ENCODE measurements at regions of chr2 and their contacts with region 1.

Region 1: GRCh38 chr2:172555522-172556283 is at the start of gene PDK1:
- DNase-seq: peak; percentile 86 to 94
- H3K4me3 ChIP-seq: peak within 1 kb of the TSS; percentile 85 to 90
- H3K27ac ChIP-seq: peak within 1 kb of the TSS; percentile 98 to 99
- H3K4me1 ChIP-seq: peaks cover 0 to 16% (median 6%) of the 10 kb centered on the region in 4 donors
- H3K27me3 ChIP-seq: no peaks in the 10 kb centered on the region
- CTCF ChIP-seq: no peak

Region 2: DNA sequence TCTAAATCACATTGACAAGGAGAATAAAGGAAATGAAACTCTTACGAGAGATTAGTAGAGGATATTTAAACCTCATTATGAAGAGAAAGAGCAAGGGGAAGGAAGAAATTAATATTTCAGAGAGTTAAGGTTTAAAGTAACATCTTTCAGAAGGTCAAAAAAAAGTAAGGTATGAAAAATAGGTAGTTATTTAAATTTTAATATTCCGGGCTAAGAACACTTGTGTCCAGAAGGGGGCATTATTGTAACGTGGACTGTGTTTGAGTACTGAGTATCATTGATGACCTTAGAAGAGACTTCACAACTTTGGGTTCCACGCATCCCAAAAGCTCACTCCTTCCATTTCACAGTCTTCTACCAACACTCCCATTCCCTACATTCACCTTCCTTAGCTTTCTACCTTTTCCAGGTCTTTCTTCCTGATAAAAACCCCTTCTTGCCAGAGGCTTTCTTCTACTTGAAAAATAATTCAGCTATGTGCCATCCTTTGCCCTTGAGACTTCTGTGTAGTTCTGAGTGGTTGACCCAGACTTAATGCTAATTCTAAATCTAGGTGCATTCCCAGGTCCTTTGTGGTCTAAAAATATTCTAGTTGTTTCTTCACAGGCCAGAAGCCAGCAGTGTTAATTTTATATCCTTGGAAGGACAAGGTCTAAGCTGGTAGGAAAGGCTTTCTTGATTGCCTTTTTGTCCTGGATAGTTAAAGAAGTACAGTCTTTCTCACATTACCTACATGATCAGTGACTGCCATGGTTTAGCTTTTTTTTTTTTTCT is 851.9 kb before region 1 on chr2:
- intact Hi-C with region 1: no loop called
- DNase-seq: no peak
- H3K4me3 ChIP-seq: no peak overlapping the region
- H3K27ac ChIP-seq: no peak overlapping the region
- H3K4me1 ChIP-seq: peaks cover 0 to 13% (median 7%) of the 10 kb centered on the region in 4 donors
- H3K27me3 ChIP-seq: no peaks in the 10 kb centered on the region
- CTCF ChIP-seq: peak; percentile 10 to 28

Region 3: GRCh38 chr2:172193331-172194089 is 362.2 kb before region 1 on chr2:
- intact Hi-C with region 1: no loop called
- DNase-seq: no peak
- H3K4me3 ChIP-seq: no peak overlapping the region
- H3K27ac ChIP-seq: no peak overlapping the region
- H3K4me1 ChIP-seq: no peaks in the 10 kb centered on the region
- H3K27me3 ChIP-seq: no peaks in the 10 kb centered on the region
- CTCF ChIP-seq: no peak

Region 4: DNA sequence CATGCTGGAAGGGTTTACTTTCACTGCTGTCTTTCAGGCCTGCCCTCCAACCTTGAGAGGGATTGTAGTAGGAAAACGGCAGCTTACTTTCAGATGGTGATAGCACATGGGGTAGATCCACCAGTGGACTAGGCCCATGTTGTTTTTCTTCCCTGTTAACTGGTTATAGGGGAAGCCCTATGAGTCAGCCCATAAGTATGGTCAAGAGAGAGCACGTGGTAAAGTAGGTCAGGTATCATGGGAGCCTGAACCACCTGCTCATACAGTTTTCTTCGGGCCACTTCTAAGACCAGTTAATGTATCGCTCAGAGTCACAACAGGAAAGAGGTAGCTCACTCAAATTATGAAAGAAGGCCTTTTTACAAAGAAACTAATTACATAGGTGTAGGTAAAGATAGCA is 33.2 kb after region 1 on chr2:
- intact Hi-C with region 1: loop called (anchors 2 kb)
- DNase-seq: no peak
- H3K4me3 ChIP-seq: no peak overlapping the region
- H3K27ac ChIP-seq: no peak overlapping the region
- H3K4me1 ChIP-seq: peaks cover 0 to 9% (median 2%) of the 10 kb centered on the region in 4 donors
- H3K27me3 ChIP-seq: no peaks in the 10 kb centered on the region
- CTCF ChIP-seq: no peak

Region 5: GRCh38 chr2:172821370-172822347 is 266.0 kb after region 1 on chr2:
- intact Hi-C with region 1: no loop called
- DNase-seq: no peak
- H3K4me3 ChIP-seq: no peak overlapping the region
- H3K27ac ChIP-seq: no peak overlapping the region
- H3K4me1 ChIP-seq: peaks cover 0 to 7% (median 4%) of the 10 kb centered on the region in 4 donors
- H3K27me3 ChIP-seq: no peaks in the 10 kb centered on the region
- CTCF ChIP-seq: no peak